Activated CD4-positive, alpha-beta memory T cell treated with anti-CD3 and anti-CD28 coated beads for 36 hours (primary cell): ENCODE measurements at regions of chr14 and their contacts with region 1.

Region 1: DNA sequence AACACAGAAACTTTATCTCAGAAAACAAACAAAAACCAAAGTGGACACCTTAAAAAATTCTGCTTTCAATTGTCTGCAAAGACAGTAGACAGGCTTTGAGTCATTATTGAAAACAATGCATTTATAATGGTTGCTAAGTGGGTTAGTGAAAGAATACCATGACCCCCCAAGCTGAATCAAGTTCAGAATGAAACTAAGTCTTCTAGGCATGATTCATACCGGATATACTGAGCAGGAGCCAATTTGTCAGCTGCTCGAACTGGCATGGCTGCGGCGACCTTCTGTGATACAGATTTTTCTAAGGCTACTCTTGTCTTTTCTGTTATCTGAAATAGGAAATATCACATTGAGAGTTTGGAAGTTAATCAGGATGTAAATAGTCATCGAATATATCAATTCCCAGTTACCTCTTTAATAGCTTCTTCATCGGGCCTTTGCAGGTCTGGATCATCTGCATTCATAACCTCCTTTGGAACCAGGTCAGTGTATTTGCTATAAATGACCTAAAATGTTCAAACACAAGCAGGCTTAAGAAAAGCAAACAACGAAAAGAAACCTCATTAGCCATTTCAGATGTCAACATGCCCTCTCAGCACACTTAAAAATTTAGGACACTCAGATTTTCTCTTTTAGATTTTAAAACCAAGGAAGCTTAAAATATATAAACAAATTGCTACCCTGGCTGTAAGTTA is 22.3 kb downstream of the SNW1 start:
- DNase-seq: peak; percentile 66
- H3K4me3 Mint-ChIP-seq: no peak overlapping the region
- H3K27ac Mint-ChIP-seq: peak overlapping the region; percentile 84
- H3K4me1 Mint-ChIP-seq: peaks cover 50% of the 10 kb centered on the region
- H3K27me3 Mint-ChIP-seq: no peaks in the 10 kb centered on the region

Region 2: DNA sequence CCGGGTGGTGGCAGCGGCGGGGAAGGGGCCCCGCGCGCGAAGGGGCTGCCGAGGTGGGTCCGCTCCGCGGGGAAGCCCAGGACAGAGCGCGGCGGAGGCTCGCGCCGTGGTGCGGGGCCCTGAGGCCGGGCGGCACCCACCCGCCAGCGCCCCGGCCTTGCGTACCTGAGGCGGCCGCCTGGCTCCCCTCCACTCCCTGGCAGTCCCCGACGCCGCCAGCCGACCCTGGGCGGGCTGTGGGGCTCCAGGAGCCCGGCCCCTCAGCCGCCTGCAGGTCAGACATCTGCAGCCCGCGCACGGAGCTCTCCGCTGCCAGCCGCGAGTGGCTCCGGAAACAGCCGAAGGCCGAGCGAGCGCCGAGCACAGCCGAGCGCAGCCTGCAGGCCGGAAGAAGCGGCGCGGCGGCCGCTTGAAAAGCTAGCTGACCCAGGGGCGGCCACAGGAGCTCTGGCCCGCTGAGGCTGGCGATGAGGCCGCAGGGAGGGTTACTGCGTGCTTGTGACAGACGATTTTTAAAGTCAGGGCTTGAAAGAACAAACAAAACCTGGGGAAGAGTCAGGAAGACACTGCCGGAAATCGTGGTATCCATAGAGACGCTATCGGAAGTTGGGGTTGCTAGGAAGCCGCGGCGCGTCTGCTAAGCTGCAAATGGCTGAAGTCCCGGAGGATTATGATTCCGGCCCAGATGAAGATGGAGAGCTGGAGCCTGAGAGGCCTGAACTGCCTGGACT is 361.8 kb before region 1 on chr14 and contains the starts of genes SAMD15 and TMED8:
- CTCF ChIA-PET with region 1: no interaction called
- POLR2A ChIA-PET with region 1: no interaction called
- intact Hi-C with region 1: loop called (anchors 10 kb)
- DNase-seq: peak; percentile 88
- H3K4me3 Mint-ChIP-seq: peak within 1 kb of the TSS; percentile 92
- H3K27ac Mint-ChIP-seq: peak within 1 kb of the TSS; percentile 82
- H3K4me1 Mint-ChIP-seq: peaks cover 42% of the 10 kb centered on the region
- H3K27me3 Mint-ChIP-seq: no peaks in the 10 kb centered on the region
- total RNA-seq, gene SAMD15: 0.38 TPM in 1 of 2 experiments, not detected in the other
- total RNA-seq, gene TMED8: 26.9 to 27.8 TPM

Region 3: GRCh38 chr14:77654001-77654441 is 84.7 kb before region 1 on chr14:
- CTCF ChIA-PET with region 1: no interaction called
- POLR2A ChIA-PET with region 1: no interaction called
- intact Hi-C with region 1: no loop called
- DNase-seq: no peak
- H3K4me3 Mint-ChIP-seq: no peak overlapping the region
- H3K27ac Mint-ChIP-seq: no peak overlapping the region
- H3K4me1 Mint-ChIP-seq: no peaks in the 10 kb centered on the region
- H3K27me3 Mint-ChIP-seq: no peaks in the 10 kb centered on the region

Region 4: GRCh38 chr14:77714926-77715325 is 23.8 kb before region 1 on chr14:
- CTCF ChIA-PET with region 1: no interaction called
- POLR2A ChIA-PET with region 1: interaction called, 8 read pairs
- intact Hi-C with region 1: loop called (anchors 1 kb)
- DNase-seq: peak; percentile 48
- H3K4me3 Mint-ChIP-seq: peak overlapping the region; percentile 32
- H3K27ac Mint-ChIP-seq: peak overlapping the region; percentile 96
- H3K4me1 Mint-ChIP-seq: peaks cover 36% of the 10 kb centered on the region
- H3K27me3 Mint-ChIP-seq: no peaks in the 10 kb centered on the region

Region 5: DNA sequence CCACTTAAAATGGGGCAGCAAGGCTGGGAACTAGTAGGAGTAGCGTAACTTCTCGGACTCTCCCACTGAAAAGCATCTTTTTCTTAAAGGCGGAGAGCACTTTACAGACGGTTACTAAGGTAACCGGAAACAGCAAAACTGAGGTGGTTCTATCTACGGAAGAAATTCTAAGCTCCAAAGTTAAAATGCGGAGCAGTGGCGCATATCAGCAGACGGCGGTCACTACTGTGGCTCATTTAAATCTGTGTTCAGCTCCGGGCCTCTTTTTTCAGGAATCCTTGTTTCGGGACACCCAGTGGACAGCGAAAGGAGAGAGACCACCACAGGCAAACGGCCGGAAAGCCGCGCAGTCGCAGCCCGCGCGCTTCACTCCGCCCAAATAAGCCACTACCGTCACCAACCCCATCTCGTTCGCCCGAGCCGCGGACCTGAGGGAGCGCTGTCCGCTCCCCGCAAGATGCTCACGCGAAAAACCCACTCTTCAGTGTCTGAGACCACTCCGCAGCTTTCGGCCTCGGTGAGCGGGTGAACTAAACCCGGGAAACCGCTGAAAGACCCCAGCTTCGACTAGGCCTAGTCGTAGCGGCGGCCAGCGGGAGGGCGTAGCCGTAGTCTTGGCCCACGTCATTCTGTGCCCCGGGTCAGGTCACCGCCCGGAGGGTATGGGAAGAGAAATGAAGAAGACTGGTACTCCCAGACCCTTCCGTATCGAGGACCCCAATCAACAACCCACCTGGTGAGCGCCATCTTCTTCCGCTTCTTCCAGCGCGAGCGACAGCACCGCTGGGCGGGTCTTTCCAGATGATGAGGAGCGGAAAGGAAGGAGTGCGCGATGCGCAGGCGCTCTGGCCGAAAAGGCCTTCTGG is 21.9 kb after region 1 on chr14 and contains the start of gene SNW1:
- CTCF ChIA-PET with region 1: no interaction called
- POLR2A ChIA-PET with region 1: interaction called, 7 read pairs
- intact Hi-C with region 1: loop called (anchors 1 kb)
- DNase-seq: peak; percentile 95
- H3K4me3 Mint-ChIP-seq: peak within 1 kb of the TSS; percentile 95
- H3K27ac Mint-ChIP-seq: peak within 1 kb of the TSS; percentile 96
- H3K4me1 Mint-ChIP-seq: peaks cover 32% of the 10 kb centered on the region
- H3K27me3 Mint-ChIP-seq: no peaks in the 10 kb centered on the region
- total RNA-seq, gene SNW1: 115 to 120 TPM

Region 6: GRCh38 chr14:77822304-77822703 is 83.6 kb after region 1 on chr14:
- CTCF ChIA-PET with region 1: no interaction called
- POLR2A ChIA-PET with region 1: no interaction called
- intact Hi-C with region 1: no loop called
- DNase-seq: no peak
- H3K4me3 Mint-ChIP-seq: no peak overlapping the region
- H3K27ac Mint-ChIP-seq: no peak overlapping the region
- H3K4me1 Mint-ChIP-seq: no peaks in the 10 kb centered on the region
- H3K27me3 Mint-ChIP-seq: no peaks in the 10 kb centered on the region